Activated B cell treated with CpG ODN at 0.5 μM for 24 hours (primary cell): ENCODE measurements at regions of chr11 and their contacts with region 1.

Region 1: GRCh38 chr11:62726915-62727763 is at the start of gene HNRNPUL2:
- DNase-seq: peak; percentile 97
- ATAC-seq: peak; percentile 84
- H3K4me3 Mint-ChIP-seq: peak within 1 kb of the TSS; percentile 98
- H3K27ac Mint-ChIP-seq: peak within 1 kb of the TSS; percentile 98
- H3K4me1 Mint-ChIP-seq: peaks cover 55% of the 10 kb centered on the region
- H3K27me3 Mint-ChIP-seq: no peaks in the 10 kb centered on the region
- CTCF ChIP-seq: no peak
- total RNA-seq, gene HNRNPUL2: 58.2 and 63.9 TPM in 2 replicates

Region 2: GRCh38 chr11:62621567-62622470 is 105.3 kb before region 1 on chr11 and contains the start of gene B3GAT3:
- CTCF ChIA-PET with region 1: no interaction called
- POLR2A ChIA-PET with region 1: interaction called, 9 read pairs
- intact Hi-C with region 1: loop called (anchors 1 kb)
- DNase-seq: peak; percentile 93
- ATAC-seq: peak; percentile 92
- H3K4me3 Mint-ChIP-seq: peak within 1 kb of the TSS; percentile 90
- H3K27ac Mint-ChIP-seq: peak within 1 kb of the TSS; percentile 93
- H3K4me1 Mint-ChIP-seq: peaks cover 19% of the 10 kb centered on the region
- H3K27me3 Mint-ChIP-seq: no peaks in the 10 kb centered on the region
- CTCF ChIP-seq: no peak
- total RNA-seq, gene B3GAT3: 48.8 and 56.6 TPM in 2 replicates

Region 3: GRCh38 chr11:62665075-62665598 is 62.0 kb before region 1 on chr11 and contains the starts of genes C11orf98 and CSKMT:
- CTCF ChIA-PET with region 1: no interaction called
- POLR2A ChIA-PET with region 1: interaction called, 68 read pairs
- intact Hi-C with region 1: loop called (anchors 2 kb)
- DNase-seq: peak; percentile 95
- ATAC-seq: peak; percentile 89
- H3K4me3 Mint-ChIP-seq: peak within 1 kb of the TSS; percentile 97
- H3K27ac Mint-ChIP-seq: peak within 1 kb of the TSS; percentile 88
- H3K4me1 Mint-ChIP-seq: peaks cover 45% of the 10 kb centered on the region
- H3K27me3 Mint-ChIP-seq: no peaks in the 10 kb centered on the region
- CTCF ChIP-seq: no peak
- total RNA-seq, gene C11orf98: 107 and 120 TPM in 2 replicates
- total RNA-seq, gene CSKMT: 50.5 and 52.1 TPM in 2 replicates

Region 4: GRCh38 chr11:62705880-62706849 is 21.0 kb before region 1 on chr11:
- CTCF ChIA-PET with region 1: no interaction called
- POLR2A ChIA-PET with region 1: interaction called, 188 read pairs
- intact Hi-C with region 1: loop called (anchors 1 kb)
- DNase-seq: peak; percentile 90
- ATAC-seq: peak; percentile 73
- H3K4me3 Mint-ChIP-seq: peak overlapping the region; percentile 92
- H3K27ac Mint-ChIP-seq: peak overlapping the region; percentile 99
- H3K4me1 Mint-ChIP-seq: peaks cover 49% of the 10 kb centered on the region
- H3K27me3 Mint-ChIP-seq: no peaks in the 10 kb centered on the region
- CTCF ChIP-seq: no peak

Region 5: DNA sequence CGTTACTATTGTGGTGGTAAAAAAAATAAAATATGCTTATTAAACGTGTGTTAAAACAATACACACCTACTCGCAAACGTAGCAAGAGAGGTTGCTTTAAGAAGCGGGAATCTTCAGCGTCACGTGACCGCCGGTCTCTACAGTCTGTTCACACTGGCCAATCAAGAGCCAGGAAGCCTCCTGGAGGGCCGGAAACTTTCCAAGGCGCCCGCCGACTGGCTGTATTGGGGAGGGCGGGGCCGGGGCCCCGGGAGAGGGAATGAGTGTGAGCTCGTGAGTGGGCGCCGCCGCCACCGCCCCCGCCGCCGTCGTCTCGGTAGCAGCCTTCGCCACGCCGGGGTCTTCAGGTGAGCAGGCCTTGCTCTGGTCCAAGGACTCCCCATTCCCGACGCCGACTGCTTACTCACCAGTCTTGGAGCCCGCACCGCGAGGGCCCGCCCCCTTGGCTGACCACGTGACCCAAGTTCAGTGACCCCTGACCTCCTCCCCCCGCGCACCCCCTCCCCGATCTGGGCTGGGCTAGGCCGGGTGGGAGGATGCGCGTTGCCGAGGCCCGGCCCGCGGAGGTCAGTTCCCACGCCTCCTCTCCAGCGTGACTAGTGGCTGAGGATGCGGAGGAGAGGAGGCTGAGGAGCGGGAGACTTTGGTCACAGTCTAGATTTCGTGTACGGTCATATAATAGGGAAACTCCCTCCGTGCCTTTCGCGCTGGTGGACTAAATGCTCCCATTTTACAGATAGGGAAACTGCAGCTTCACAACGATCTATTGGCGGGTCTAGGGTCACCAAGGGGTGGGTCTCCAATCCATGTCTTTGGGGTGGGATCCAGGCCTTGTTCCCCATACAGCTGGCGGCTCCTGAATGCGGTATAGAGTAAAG is 44.2 kb after region 1 on chr11 and contains the start of gene TAF6L:
- CTCF ChIA-PET with region 1: no interaction called
- POLR2A ChIA-PET with region 1: interaction called, 65 read pairs
- intact Hi-C with region 1: loop called (anchors 1 kb)
- DNase-seq: peak; percentile 81
- ATAC-seq: peak; percentile 88
- H3K4me3 Mint-ChIP-seq: peak within 1 kb of the TSS; percentile 92
- H3K27ac Mint-ChIP-seq: peak within 1 kb of the TSS; percentile 94
- H3K4me1 Mint-ChIP-seq: peaks cover 28% of the 10 kb centered on the region
- H3K27me3 Mint-ChIP-seq: no peaks in the 10 kb centered on the region
- CTCF ChIP-seq: no peak
- total RNA-seq, gene TAF6L: 32.9 and 38.6 TPM in 2 replicates

Region 6: DNA sequence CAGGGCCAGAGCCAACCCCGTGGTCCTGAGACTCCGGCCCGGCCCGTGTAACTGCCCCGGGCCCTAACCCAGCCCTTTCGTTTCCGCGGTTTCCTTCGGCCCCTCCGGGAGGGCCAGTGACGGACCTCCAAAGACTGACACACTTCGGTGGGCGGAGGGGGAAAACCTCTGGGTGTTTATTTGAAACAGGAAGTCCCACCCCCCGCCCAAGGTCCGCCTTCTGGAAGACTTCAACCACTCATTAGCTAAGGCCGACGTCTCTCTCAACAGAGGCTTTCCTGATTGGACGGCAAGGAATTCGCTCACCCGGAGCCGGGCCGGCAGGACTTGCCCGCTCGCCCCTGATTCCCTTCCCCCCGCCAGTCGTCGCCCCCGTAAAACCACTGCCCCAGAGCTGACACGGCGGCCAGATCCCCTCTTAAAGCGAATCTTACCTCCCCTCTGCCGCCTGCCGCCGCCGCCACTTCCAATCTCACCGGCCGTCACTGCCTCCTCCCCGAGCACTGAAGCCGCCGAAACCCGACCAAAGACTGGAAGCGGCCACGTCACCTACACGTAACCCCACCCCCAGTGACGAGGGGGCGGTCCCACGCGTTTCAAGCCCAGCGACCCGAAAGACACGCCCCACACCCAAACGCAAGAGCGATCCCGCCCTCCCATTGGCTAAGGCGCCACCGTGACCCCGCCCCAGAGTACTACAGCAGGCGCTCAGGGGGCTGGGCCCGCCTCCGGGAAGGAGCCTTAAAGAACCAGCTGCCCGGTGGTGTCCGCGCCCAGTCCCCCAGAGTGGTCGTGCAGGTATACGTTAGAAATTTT is 104.6 kb after region 1 on chr11 and contains the start of gene STX5:
- CTCF ChIA-PET with region 1: no interaction called
- POLR2A ChIA-PET with region 1: interaction called, 32 read pairs
- intact Hi-C with region 1: no loop called
- DNase-seq: peak; percentile 98
- ATAC-seq: peak; percentile 91
- H3K4me3 Mint-ChIP-seq: peak within 1 kb of the TSS; percentile 100
- H3K27ac Mint-ChIP-seq: peak within 1 kb of the TSS; percentile 100
- H3K4me1 Mint-ChIP-seq: peaks cover 47% of the 10 kb centered on the region
- H3K27me3 Mint-ChIP-seq: no peaks in the 10 kb centered on the region
- CTCF ChIP-seq: no peak
- total RNA-seq, gene STX5: 58.4 and 71.5 TPM in 2 replicates

Region 7: DNA sequence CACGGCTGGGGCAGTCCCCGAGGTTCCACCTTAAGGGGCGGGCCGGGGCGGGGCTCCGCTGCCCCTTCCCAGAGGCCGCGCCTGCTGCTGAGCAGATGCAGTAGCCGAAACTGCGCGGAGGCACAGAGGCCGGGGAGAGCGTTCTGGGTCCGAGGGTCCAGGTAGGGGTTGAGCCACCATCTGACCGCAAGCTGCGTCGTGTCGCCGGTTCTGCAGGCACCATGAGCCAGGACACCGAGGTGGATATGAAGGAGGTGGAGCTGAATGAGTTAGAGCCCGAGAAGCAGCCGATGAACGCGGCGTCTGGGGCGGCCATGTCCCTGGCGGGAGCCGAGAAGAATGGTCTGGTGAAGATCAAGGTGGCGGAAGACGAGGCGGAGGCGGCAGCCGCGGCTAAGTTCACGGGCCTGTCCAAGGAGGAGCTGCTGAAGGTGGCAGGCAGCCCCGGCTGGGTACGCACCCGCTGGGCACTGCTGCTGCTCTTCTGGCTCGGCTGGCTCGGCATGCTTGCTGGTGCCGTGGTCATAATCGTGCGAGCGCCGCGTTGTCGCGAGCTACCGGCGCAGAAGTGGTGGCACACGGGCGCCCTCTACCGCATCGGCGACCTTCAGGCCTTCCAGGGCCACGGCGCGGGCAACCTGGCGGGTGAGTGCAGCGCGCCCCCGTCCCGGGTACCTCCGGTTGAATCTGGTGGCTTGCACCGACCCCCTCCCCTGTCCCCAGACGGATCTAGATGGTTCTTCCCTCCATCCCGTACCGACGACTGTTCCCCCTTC is 153.9 kb after region 1 on chr11 and contains the start of gene SLC3A2:
- CTCF ChIA-PET with region 1: no interaction called
- POLR2A ChIA-PET with region 1: interaction called, 53 read pairs
- intact Hi-C with region 1: loop called (anchors 1 kb)
- DNase-seq: peak; percentile 86
- ATAC-seq: peak; percentile 80
- H3K4me3 Mint-ChIP-seq: peak within 1 kb of the TSS; percentile 100
- H3K27ac Mint-ChIP-seq: peak within 1 kb of the TSS; percentile 100
- H3K4me1 Mint-ChIP-seq: peaks cover 46% of the 10 kb centered on the region
- H3K27me3 Mint-ChIP-seq: no peaks in the 10 kb centered on the region
- CTCF ChIP-seq: no peak
- total RNA-seq, gene SLC3A2: 270 and 274 TPM in 2 replicates